Ovary (tissue), 10 donors: ENCODE measurements at regions of chr20 and their contacts with region 1.

Region 1: DNA sequence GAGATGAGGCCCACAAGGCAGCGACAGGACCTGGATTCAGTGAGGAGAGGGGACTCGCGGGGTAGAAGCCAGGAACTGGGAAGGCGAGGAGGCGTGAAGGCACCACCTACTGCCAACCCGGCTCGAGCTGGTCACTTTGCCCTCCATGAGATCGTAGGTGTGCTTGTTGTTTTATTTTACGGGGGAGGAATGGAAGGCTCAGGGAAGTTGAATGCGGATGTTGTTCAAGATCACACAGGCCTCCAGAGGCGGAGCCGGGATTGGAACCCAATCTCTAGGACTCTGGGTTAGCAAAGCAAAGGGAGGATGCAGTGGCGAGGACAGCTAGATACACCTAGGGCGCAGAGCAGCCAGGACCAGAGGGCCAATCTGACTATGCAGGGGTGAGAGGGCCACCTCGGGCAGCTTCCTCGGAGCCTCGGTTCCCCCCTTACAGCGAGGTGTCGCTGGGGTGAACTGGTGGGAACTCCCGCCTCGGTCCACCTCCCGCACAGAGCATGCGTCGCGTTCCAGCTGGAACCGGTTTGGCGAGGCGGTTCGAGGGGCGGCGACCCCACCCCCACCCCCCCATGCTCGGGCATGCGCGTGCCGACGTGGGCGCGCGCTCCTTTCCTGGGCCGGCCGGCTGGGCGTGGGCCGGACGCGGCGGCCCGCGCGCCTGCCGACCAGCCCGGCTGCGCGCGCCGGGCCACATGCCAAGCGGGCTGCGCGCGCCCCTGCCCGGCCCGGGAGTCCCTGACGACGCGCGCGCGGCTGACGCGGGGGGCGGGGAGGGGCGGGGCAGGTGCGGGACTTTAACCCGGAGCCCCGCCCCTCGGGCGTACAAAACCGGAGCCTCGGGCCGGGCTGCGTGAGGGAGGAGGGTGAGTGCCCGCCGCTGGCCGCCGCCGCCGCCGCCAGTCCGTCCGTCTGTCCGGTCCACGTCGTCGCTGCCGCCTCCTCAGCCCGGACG is 80.4 kb upstream of the MYL9 start:
- DNase-seq: peak; percentile 93 to 96 (median 94)
- H3K4me3 ChIP-seq: peak overlapping the region; percentile 75
- H3K27ac ChIP-seq: peak overlapping the region; percentile 33 to 96
- H3K4me1 ChIP-seq: peaks cover 5% of the 10 kb centered on the region
- H3K27me3 ChIP-seq: no peaks in the 10 kb centered on the region
- CTCF ChIP-seq: no peak
- EP300 ChIP-seq: no peak
- POLR2A ChIP-seq: peak; percentile 89

Region 2: GRCh38 chr20:36527331-36528125 is 66.6 kb after region 1 on chr20:
- intact Hi-C with region 1: loop called in 2 of 4 experiments (anchors 5 kb)
- DNase-seq: peak; percentile 85 to 91 (median 89)
- H3K4me3 ChIP-seq: no peak overlapping the region
- H3K27ac ChIP-seq: peak overlapping the region; percentile 66 to 84
- H3K4me1 ChIP-seq: peaks cover 4% of the 10 kb centered on the region
- H3K27me3 ChIP-seq: no peaks in the 10 kb centered on the region
- CTCF ChIP-seq: no peak
- EP300 ChIP-seq: no peak
- POLR2A ChIP-seq: peak; percentile 36

Region 3: DNA sequence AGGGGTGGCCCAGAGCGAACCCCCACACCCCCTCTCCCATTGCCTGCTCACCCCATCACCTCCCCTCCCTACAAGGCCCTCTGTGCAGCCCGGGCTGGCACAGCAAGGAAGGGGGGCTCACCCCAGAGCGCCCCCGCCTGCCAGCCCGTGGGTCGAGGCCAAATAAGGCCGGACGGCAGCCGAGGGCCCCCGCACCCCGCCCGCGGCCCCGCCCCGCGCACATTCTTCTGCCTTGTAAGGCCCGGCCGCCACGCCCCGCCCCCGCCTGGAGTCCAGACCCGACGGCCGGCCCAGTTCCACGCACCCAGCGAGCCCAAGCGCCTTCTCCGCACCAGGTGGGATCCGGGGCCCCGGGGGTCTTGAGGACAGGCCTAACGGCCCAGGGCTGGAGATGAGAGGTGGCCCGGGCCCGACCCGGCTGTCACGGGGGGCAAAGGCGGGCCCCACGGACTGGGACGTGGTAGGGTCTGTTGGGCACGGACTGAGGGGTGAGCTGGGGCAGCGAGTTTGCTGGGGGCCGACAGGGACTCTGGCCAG is 80.4 kb after region 1 on chr20 and contains the start of gene MYL9:
- intact Hi-C with region 1: loop called in 3 of 4 experiments (anchors 5 kb)
- DNase-seq: peak; percentile 94 to 97 (median 96)
- H3K4me3 ChIP-seq: peak within 1 kb of the TSS; percentile 90
- H3K27ac ChIP-seq: peak within 1 kb of the TSS; percentile 89 to 94
- H3K4me1 ChIP-seq: peaks cover 28% of the 10 kb centered on the region
- H3K27me3 ChIP-seq: no peaks in the 10 kb centered on the region
- CTCF ChIP-seq: no peak
- EP300 ChIP-seq: no peak
- POLR2A ChIP-seq: peak; percentile 71
- total RNA-seq, gene MYL9: 69.5 to 1,408 (median 681) TPM

Region 4: GRCh38 chr20:36591854-36592641 is 131.1 kb after region 1 on chr20:
- intact Hi-C with region 1: loop called in 1 of 4 experiments (anchors 10 kb)
- DNase-seq: peak in 3 of 5 donors; percentile 34 to 51 (median 48)
- H3K4me3 ChIP-seq: no peak overlapping the region
- H3K27ac ChIP-seq: no peak overlapping the region
- H3K4me1 ChIP-seq: peaks cover 8% of the 10 kb centered on the region
- H3K27me3 ChIP-seq: no peaks in the 10 kb centered on the region
- CTCF ChIP-seq: peak in 2 of 3 donors; percentile 33 to 46
- EP300 ChIP-seq: no peak
- POLR2A ChIP-seq: no peak